Activated B cell treated with CpG ODN at 0.5 μM for 24 hours (primary cell): ENCODE measurements at regions of chr1 and their contacts with region 1.

Region 1: DNA sequence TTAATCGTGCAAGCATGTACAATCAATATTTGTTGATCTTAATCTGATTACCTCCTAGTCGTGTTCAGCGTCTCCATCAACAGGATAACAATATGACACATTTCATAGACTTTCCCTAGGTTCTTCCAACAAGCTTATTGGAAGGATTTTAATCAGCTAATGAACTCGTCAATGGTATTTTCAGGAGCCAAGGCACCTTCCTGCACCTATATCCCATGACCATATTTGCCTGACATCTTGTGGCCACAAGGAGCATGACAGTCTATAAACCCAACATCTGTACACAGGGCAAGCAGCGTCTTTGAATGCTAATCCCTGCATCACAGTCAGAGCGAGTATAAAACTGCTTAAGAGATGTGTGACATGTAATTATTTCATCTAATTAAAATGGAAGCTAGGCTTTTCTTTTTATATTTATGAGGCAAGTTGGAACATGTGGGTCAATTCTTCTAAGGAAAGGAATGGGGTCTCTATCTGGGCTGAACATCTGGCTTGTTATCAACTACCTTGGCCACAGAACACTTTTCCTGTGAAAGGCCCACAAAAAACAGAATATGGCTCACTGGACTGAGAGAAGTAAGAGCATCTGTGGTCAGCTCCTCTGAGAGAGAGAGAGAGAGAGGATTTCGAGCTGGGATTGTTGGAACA is 388.8 kb downstream of the NTNG1 start:
- DNase-seq: no peak
- ATAC-seq: peak; percentile 95
- H3K4me3 Mint-ChIP-seq: no peak overlapping the region
- H3K27ac Mint-ChIP-seq: no peak overlapping the region
- H3K4me1 Mint-ChIP-seq: peaks cover 4% of the 10 kb centered on the region
- H3K27me3 Mint-ChIP-seq: no peaks in the 10 kb centered on the region
- CTCF ChIP-seq: peak; percentile 25

Region 2: DNA sequence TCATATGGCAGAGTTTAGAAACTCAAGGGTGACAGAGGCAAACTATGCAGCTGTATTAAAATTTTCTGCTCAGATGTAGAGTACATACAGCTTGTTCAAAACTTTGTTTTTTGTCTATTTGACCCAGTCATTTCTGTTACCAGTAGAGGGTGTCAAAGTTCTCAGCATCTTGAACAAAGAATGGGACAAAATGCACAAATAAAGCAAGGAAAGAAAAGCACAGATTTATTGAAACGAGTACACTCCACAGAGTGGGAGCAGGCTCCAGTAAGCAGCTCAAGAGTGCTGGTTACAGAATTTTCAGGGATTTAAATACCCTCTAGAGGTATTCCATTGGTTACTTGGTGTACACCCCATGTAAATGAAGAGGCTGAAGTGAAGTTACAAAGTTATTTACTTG is 482.1 kb before region 1 on chr1:
- CTCF ChIA-PET with region 1: interaction called, 3 read pairs
- POLR2A ChIA-PET with region 1: no interaction called
- intact Hi-C with region 1: loop called (anchors 1 kb)
- DNase-seq: no peak
- ATAC-seq: no peak
- H3K4me3 Mint-ChIP-seq: no peak overlapping the region
- H3K27ac Mint-ChIP-seq: no peak overlapping the region
- H3K4me1 Mint-ChIP-seq: peaks cover 3% of the 10 kb centered on the region
- H3K27me3 Mint-ChIP-seq: peaks cover 4% of the 10 kb centered on the region
- CTCF ChIP-seq: no peak

Region 3: GRCh38 chr1:107196973-107197562 is 332.6 kb before region 1 on chr1:
- CTCF ChIA-PET with region 1: interaction called, 31 read pairs
- POLR2A ChIA-PET with region 1: no interaction called
- intact Hi-C with region 1: loop called (anchors 1 kb)
- DNase-seq: no peak
- ATAC-seq: peak; percentile 74
- H3K4me3 Mint-ChIP-seq: no peak overlapping the region
- H3K27ac Mint-ChIP-seq: no peak overlapping the region
- H3K4me1 Mint-ChIP-seq: peaks cover 3% of the 10 kb centered on the region
- H3K27me3 Mint-ChIP-seq: no peaks in the 10 kb centered on the region
- CTCF ChIP-seq: no peak

Region 4: DNA sequence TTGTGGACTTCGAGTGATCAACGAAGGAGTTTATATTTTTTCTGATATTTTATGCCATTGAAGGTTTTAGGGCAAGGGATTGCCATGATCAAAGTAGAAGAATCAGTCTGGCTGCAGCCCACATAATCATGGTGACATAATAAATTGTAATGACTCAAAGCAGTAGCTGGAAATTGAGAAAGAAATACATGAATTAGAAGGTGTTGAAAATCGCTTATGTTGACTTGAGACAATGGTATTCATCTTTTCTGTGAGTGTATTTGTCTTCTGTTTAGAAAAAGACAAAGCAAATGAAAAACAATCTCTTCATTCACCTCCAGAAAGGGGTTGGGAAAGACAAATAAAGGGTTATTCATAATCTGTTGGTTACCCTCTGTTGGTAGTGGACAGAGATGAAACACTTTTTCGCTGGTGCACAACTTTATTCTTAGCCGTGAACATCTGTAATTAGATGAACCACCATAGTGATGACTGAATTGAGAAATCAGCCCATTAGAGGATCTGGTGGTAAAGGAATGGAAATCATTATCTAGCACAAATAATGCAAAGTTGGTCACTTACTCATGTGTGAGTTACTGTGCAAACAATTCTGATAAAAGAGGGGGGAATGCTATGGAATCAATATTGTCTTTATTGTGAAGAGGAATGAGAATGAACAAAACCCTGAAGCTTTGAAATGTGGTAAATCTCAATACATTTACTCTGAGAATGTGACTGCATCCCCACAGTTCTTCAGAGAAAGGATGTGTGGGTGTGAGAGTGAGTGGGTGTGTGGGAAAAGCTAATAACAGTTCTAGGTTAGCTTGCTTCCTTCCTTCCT is 266.9 kb before region 1 on chr1:
- CTCF ChIA-PET with region 1: no interaction called
- POLR2A ChIA-PET with region 1: no interaction called
- intact Hi-C with region 1: no loop called
- DNase-seq: no peak
- ATAC-seq: no peak
- H3K4me3 Mint-ChIP-seq: no peak overlapping the region
- H3K27ac Mint-ChIP-seq: no peak overlapping the region
- H3K4me1 Mint-ChIP-seq: peaks cover 17% of the 10 kb centered on the region
- H3K27me3 Mint-ChIP-seq: no peaks in the 10 kb centered on the region
- CTCF ChIP-seq: no peak

Region 5: DNA sequence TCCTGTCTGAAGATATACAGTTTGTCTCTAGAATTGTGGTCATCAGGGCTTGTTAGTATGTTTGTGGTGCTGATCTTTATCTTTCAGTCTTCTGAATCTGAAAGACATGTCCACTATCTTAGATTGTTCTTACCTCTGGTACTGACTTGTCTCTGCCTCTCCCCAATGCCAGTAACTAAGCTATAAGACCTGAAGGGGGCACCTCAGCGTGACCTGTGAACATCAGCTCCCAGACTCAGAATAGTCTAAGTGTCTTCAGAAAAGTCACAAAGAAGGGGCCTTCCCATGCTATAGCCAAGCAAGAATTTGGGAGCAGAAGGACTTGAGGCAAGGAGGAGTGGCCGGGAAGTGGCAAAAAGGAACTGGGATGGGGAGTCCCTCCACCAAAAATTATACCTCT is 210.7 kb before region 1 on chr1:
- CTCF ChIA-PET with region 1: interaction called, 6 read pairs
- POLR2A ChIA-PET with region 1: no interaction called
- intact Hi-C with region 1: loop called (anchors 1 kb)
- DNase-seq: no peak
- ATAC-seq: no peak
- H3K4me3 Mint-ChIP-seq: no peak overlapping the region
- H3K27ac Mint-ChIP-seq: peak overlapping the region; percentile 11
- H3K4me1 Mint-ChIP-seq: peaks cover 14% of the 10 kb centered on the region
- H3K27me3 Mint-ChIP-seq: no peaks in the 10 kb centered on the region
- CTCF ChIP-seq: no peak

Region 6: GRCh38 chr1:107480548-107481415 is 48.8 kb before region 1 on chr1:
- CTCF ChIA-PET with region 1: interaction called, 5 read pairs
- POLR2A ChIA-PET with region 1: no interaction called
- intact Hi-C with region 1: loop called (anchors 2 kb)
- DNase-seq: peak; percentile 50
- ATAC-seq: peak; percentile 98
- H3K4me3 Mint-ChIP-seq: peak overlapping the region; percentile 73
- H3K27ac Mint-ChIP-seq: peak overlapping the region; percentile 54
- H3K4me1 Mint-ChIP-seq: peaks cover 15% of the 10 kb centered on the region
- H3K27me3 Mint-ChIP-seq: no peaks in the 10 kb centered on the region
- CTCF ChIP-seq: no peak